A549 (cell line): ENCODE measurements at regions of chr9 and their contacts with region 1.

Region 1: GRCh38 chr9:100011062-100011681 is 87.6 kb downstream of the ERP44 start:
- DNase-seq: peak; percentile 24 to 72
- ATAC-seq: peak; percentile 43 to 68; a peak in 2 of 6 replicates
- H3K4me3 ChIP-seq: no peak overlapping the region
- H3K27ac ChIP-seq: no peak overlapping the region
- H3K4me1 ChIP-seq: no peaks in the 10 kb centered on the region
- CTCF ChIP-seq: peak; percentile 63
- EP300 ChIP-seq: no peak
- POLR2A ChIP-seq: no peak
- RAD21 ChIP-seq: peak; percentile 65 to 69

Region 2: DNA sequence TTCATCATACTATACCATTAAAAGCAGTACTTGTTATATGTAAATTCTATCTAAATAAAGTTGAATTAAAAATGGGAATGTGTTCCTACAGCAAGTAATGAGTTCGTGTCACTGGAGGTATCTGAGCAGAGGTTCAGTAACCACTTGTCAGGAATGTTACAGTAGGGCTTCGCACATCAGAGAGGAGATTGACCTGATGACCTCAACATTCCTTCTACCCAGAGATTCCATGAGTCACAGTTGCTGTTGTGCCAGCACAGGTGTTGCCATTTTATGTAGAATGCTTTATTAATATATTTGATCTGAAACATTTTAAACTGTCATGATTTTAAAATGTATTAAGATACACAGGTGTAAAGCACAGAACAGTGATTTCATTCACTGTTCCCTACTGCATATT is 44.5 kb before region 1 on chr9:
- CTCF ChIA-PET with region 1: no interaction called
- POLR2A ChIA-PET with region 1: no interaction called
- DNase-seq: peak; percentile 32 to 35
- ATAC-seq: peak in 1 of 2 experiments; percentile 47; a peak in 1 of 6 replicates
- H3K4me3 ChIP-seq: no peak overlapping the region
- H3K27ac ChIP-seq: no peak overlapping the region
- H3K4me1 ChIP-seq: peaks cover 8% of the 10 kb centered on the region; the same call in 2 of the 3 replicates
- CTCF ChIP-seq: no peak
- EP300 ChIP-seq: no peak
- POLR2A ChIP-seq: no peak
- RAD21 ChIP-seq: no peak

Region 3: GRCh38 chr9:99986642-99987041 is 24.5 kb before region 1 on chr9:
- CTCF ChIA-PET with region 1: no interaction called
- POLR2A ChIA-PET with region 1: no interaction called
- DNase-seq: no peak
- ATAC-seq: no peak
- H3K4me3 ChIP-seq: no peak overlapping the region
- H3K27ac ChIP-seq: no peak overlapping the region
- H3K4me1 ChIP-seq: no peaks in the 10 kb centered on the region
- CTCF ChIP-seq: no peak
- EP300 ChIP-seq: no peak
- POLR2A ChIP-seq: no peak
- RAD21 ChIP-seq: no peak

Region 4: GRCh38 chr9:100028201-100028784 is 17.1 kb after region 1 on chr9:
- CTCF ChIA-PET with region 1: interaction called, 10 read pairs
- POLR2A ChIA-PET with region 1: no interaction called
- DNase-seq: peak; percentile 54 to 76
- ATAC-seq: peak; percentile 99 to 100
- H3K4me3 ChIP-seq: no peak overlapping the region
- H3K27ac ChIP-seq: no peak overlapping the region
- H3K4me1 ChIP-seq: no peaks in the 10 kb centered on the region
- CTCF ChIP-seq: peak; percentile 85
- EP300 ChIP-seq: no peak
- POLR2A ChIP-seq: no peak
- RAD21 ChIP-seq: peak; percentile 85 to 88

Region 5: GRCh38 chr9:100084734-100085133 is 73.6 kb after region 1 on chr9:
- CTCF ChIA-PET with region 1: no interaction called
- POLR2A ChIA-PET with region 1: no interaction called
- DNase-seq: no peak
- ATAC-seq: no peak
- H3K4me3 ChIP-seq: no peak overlapping the region
- H3K27ac ChIP-seq: no peak overlapping the region
- H3K4me1 ChIP-seq: peaks cover 7% of the 10 kb centered on the region; the same call in 1 of the 3 replicates
- CTCF ChIP-seq: no peak
- EP300 ChIP-seq: no peak
- POLR2A ChIP-seq: no peak
- RAD21 ChIP-seq: no peak